HEK293 (cell line): ENCODE measurements at regions of chr19 and their contacts with region 1.

Region 1: GRCh38 chr19:45817010-45817724 is 2.1 kb upstream of the RSPH6A start:
- H3K4me3 ChIP-seq: no peak overlapping the region
- H3K27ac ChIP-seq: peak overlapping the region; percentile 56
- H3K4me1 ChIP-seq: peaks cover 4% of the 10 kb centered on the region; the same call in 1 of the 2 replicates
- CTCF ChIP-seq: peak; percentile 99

Region 2: GRCh38 chr19:45496349-45496953 is 320.7 kb before region 1 on chr19:
- CTCF ChIA-PET with region 1: no interaction called
- POLR2A ChIA-PET with region 1: no interaction called
- H3K4me3 ChIP-seq: peak overlapping the region; percentile 53
- H3K27ac ChIP-seq: no peak overlapping the region
- H3K4me1 ChIP-seq: peaks cover 6% of the 10 kb centered on the region
- CTCF ChIP-seq: no peak

Region 3: GRCh38 chr19:45792470-45793177 is 24.5 kb before region 1 on chr19 and contains the start of gene DMWD:
- CTCF ChIA-PET with region 1: interaction called, 11 read pairs
- POLR2A ChIA-PET with region 1: interaction called, 5 read pairs
- H3K4me3 ChIP-seq: peak within 1 kb of the TSS; percentile 86
- H3K27ac ChIP-seq: peak within 1 kb of the TSS; percentile 96
- H3K4me1 ChIP-seq: peaks cover 13% of the 10 kb centered on the region
- CTCF ChIP-seq: no peak

Region 4: DNA sequence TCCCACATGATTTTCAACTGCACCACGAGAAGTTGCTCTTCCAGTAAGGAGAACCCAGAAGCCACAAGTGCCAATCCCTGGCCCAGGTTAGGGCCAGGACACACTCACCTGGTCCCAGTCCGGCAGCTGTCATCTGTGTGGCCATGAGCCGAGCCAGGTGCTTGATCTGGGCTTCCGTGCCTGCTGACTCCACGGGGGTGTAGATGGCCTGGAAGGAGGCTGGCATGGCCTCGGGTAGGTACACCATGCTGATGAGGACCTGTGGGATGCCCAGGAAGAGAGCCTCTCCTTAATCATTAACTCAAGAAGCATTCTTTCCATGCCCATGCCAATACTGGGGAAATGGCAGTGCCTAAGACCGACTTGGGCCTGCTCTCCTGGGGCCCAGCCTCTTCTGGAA is 17.8 kb after region 1 on chr19:
- CTCF ChIA-PET with region 1: interaction called, 28 read pairs
- POLR2A ChIA-PET with region 1: interaction called, 3 read pairs
- H3K4me3 ChIP-seq: no peak overlapping the region
- H3K27ac ChIP-seq: no peak overlapping the region
- H3K4me1 ChIP-seq: no peaks in the 10 kb centered on the region
- CTCF ChIP-seq: no peak

Region 5: GRCh38 chr19:45848922-45849321 is 31.8 kb after region 1 on chr19:
- CTCF ChIA-PET with region 1: interaction called, 18 read pairs
- POLR2A ChIA-PET with region 1: interaction called, 4 read pairs
- H3K4me3 ChIP-seq: no peak overlapping the region
- H3K27ac ChIP-seq: no peak overlapping the region
- H3K4me1 ChIP-seq: no peaks in the 10 kb centered on the region
- CTCF ChIP-seq: no peak

Region 6: GRCh38 chr19:45886427-45887199 is 69.4 kb after region 1 on chr19:
- CTCF ChIA-PET with region 1: interaction called, 55 read pairs
- POLR2A ChIA-PET with region 1: interaction called, 7 read pairs
- H3K4me3 ChIP-seq: peak overlapping the region; percentile 65
- H3K27ac ChIP-seq: peak overlapping the region; percentile 93
- H3K4me1 ChIP-seq: peaks cover 13% of the 10 kb centered on the region
- CTCF ChIP-seq: no peak